Activated CD4-positive, alpha-beta T cell treated with anti-CD3 and anti-CD28 coated beads for 36 hours (primary cell): ENCODE measurements at regions of chr11 and their contacts with region 1.

Region 1: DNA sequence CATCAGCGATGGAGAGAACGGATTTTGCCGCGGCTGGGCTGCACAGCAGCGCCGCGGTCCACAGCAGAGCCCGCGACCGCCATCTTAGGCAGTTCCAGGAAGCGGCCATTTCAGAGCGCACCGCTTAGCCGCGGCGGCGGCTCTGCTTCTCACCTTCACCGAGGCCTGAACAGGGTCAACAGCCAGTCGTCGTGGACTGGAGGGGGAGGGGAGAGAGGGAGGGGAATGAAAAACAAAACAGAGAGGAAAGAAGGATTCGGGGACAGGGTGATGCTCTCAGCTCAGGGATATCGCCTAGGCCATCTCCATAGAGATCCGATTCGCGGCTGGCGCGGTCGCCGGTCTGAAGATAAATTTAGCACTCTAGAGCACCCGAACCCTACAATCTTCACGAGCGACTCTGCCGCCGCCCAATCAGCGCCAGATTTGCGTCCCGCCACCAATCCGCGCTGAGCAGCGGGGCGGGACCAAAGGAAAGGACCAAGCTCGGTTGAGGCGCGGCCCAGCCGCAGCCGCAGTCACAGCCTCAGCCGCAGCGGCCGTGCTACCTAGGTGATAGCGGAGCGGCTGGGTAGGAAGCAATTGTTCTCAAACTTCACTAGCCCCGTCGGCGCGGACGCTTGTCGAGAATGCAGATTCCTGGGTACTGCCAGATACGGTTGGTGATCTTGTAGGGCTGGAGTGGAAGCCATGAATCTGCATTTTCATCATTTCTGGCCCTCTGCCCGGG is at the start of gene ZBED5:
- DNase-seq: peak; percentile 98
- ATAC-seq: peak; percentile 93
- H3K4me3 Mint-ChIP-seq: peak within 1 kb of the TSS; percentile 100
- H3K27ac Mint-ChIP-seq: peak within 1 kb of the TSS; percentile 100
- H3K4me1 Mint-ChIP-seq: peaks cover 40% of the 10 kb centered on the region
- H3K27me3 Mint-ChIP-seq: no peaks in the 10 kb centered on the region
- total RNA-seq, gene ZBED5: 34.1 to 44.3 TPM

Region 2: DNA sequence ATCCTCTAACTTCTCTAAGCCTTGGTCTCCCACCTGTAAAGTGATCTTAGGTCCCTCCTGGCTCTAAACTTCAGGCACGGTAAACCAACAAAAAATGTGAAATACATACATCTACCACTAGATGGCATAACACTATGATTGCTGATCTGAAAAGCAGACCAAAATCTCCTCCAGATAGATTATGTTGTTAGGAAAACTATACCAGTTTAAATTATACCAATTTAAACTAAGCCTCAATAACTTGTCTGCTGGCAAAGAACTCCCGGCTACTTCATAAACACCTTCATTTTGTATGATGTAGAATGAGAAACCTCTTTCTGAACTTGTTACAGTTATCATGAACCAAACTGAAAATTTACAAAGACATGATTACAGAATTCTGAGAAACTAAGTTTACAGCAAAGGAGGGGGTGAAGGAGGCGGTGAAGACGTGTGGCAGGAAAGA is 649.7 kb before region 1 on chr11:
- CTCF ChIA-PET with region 1: no interaction called
- POLR2A ChIA-PET with region 1: no interaction called
- intact Hi-C with region 1: no loop called
- DNase-seq: peak; percentile 11
- ATAC-seq: peak; percentile 74
- H3K4me3 Mint-ChIP-seq: no peak overlapping the region
- H3K27ac Mint-ChIP-seq: no peak overlapping the region
- H3K4me1 Mint-ChIP-seq: no peaks in the 10 kb centered on the region
- H3K27me3 Mint-ChIP-seq: peaks cover 3% of the 10 kb centered on the region

Region 3: DNA sequence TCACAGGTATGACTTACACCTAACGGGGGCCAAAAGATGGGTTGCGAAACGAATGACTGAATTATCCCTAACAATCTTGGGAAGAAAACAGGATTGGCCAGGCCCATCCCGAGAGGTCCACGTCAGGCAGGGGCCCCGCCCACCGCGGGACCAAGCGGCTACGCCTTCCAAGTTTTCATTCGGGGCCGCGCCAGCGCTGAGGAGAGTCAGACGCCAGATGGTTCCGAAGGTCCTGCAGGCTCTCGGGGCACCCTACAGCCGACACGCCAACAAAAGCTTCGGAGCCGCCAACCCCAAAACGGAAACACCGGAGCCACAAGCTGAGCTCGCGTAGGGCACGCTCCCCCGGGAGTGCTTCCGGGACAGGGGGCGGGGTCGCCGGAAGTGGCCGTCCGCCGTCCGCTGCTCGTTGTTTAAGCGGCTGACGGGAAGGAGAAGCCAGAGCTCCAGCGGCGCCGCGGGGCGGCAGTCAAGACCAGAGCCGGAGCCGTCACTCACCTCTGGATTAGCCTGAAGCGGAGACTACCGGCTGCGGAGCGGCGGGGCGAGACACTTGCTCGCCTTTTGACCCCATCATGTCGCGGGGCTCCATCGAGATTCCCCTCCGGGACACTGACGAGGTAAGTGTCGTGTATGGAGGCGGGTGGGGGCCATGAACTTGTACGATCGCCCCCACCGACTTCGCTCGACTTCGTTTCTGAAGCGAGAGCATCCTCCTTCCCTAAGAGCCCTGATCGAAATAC is 106.9 kb before region 1 on chr11 and contains the start of gene CTR9:
- CTCF ChIA-PET with region 1: interaction called, 3 read pairs
- POLR2A ChIA-PET with region 1: no interaction called
- intact Hi-C with region 1: loop called (anchors 1 kb)
- DNase-seq: peak; percentile 97
- ATAC-seq: peak; percentile 92
- H3K4me3 Mint-ChIP-seq: peak within 1 kb of the TSS; percentile 96
- H3K27ac Mint-ChIP-seq: peak within 1 kb of the TSS; percentile 92
- H3K4me1 Mint-ChIP-seq: peaks cover 16% of the 10 kb centered on the region
- H3K27me3 Mint-ChIP-seq: no peaks in the 10 kb centered on the region
- total RNA-seq, gene CTR9: 39.7 to 43.9 TPM

Region 4: GRCh38 chr11:10878408-10879214 is 20.7 kb after region 1 on chr11:
- CTCF ChIA-PET with region 1: interaction called, 9 read pairs
- POLR2A ChIA-PET with region 1: no interaction called
- intact Hi-C with region 1: loop called in 1 of 2 experiments (anchors 2 kb)
- DNase-seq: no peak
- ATAC-seq: peak; percentile 83
- H3K4me3 Mint-ChIP-seq: no peak overlapping the region
- H3K27ac Mint-ChIP-seq: peak overlapping the region; percentile 52
- H3K4me1 Mint-ChIP-seq: peaks cover 13% of the 10 kb centered on the region
- H3K27me3 Mint-ChIP-seq: no peaks in the 10 kb centered on the region

Region 5: DNA sequence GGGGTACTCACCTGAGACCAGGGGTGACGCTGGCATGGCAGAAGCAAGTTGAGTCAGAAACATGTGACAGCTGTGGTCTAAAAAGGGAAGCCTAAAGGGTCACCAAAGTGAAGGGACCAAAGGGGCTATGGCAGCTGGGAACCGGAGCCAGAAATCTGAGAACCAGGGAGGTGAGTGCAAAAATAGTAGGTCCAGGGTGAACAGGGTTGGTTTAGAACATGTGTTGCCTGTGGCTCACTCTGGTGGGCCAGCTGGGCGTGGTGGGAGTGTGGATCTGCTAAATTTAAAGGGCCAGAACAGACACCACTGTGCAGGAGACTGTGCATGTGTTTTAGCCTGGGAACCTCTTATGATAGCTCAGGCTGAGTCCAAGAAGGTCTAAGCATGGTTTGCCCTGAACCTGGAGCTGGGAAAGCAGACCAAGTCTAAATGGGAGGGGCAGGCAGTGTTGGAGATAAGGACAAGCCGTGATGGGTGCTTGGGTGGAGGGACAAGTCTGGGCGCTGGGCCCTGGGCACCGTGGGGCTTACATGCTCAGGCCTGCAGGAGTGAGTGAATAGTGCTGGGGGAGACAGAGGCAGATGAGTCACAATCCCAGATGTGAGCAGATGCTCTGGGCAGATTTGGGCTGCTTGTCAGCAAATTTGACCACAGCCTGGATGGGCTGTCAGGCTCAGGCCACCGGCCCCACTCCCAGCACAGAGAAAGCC is 41.4 kb after region 1 on chr11:
- CTCF ChIA-PET with region 1: no interaction called
- POLR2A ChIA-PET with region 1: interaction called, 9 read pairs
- intact Hi-C with region 1: loop called (anchors 1 to 2 kb)
- DNase-seq: no peak
- ATAC-seq: peak; percentile 51
- H3K4me3 Mint-ChIP-seq: no peak overlapping the region
- H3K27ac Mint-ChIP-seq: peak overlapping the region; percentile 91
- H3K4me1 Mint-ChIP-seq: peaks cover 29% of the 10 kb centered on the region
- H3K27me3 Mint-ChIP-seq: peaks cover 5% of the 10 kb centered on the region

Region 6: DNA sequence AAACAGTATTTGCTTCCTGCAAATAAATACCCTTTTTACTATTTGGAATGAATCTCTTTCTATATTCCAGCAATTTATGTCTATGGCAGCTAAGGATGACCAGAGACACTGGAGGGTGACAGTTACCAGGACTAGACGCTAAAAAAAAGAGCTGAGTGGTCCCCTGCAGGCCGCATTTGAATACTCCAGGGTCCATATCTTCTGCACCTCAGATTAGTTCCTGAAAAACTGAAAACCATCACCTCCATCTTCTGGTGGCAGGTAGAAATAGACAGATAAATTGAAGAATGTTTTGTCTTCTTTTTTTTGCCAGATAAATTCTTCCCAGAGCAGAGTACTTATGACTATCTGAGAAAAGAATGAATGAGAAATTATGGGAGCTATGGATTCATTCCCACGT is 349.6 kb after region 1 on chr11:
- CTCF ChIA-PET with region 1: no interaction called
- POLR2A ChIA-PET with region 1: no interaction called
- intact Hi-C with region 1: no loop called
- DNase-seq: no peak
- ATAC-seq: no peak
- H3K4me3 Mint-ChIP-seq: no peak overlapping the region
- H3K27ac Mint-ChIP-seq: no peak overlapping the region
- H3K4me1 Mint-ChIP-seq: no peaks in the 10 kb centered on the region
- H3K27me3 Mint-ChIP-seq: peaks cover 18% of the 10 kb centered on the region